CD4-positive, alpha-beta memory T cell (primary cell): ENCODE measurements at regions of chr14 and their contacts with region 1.

Region 1: DNA sequence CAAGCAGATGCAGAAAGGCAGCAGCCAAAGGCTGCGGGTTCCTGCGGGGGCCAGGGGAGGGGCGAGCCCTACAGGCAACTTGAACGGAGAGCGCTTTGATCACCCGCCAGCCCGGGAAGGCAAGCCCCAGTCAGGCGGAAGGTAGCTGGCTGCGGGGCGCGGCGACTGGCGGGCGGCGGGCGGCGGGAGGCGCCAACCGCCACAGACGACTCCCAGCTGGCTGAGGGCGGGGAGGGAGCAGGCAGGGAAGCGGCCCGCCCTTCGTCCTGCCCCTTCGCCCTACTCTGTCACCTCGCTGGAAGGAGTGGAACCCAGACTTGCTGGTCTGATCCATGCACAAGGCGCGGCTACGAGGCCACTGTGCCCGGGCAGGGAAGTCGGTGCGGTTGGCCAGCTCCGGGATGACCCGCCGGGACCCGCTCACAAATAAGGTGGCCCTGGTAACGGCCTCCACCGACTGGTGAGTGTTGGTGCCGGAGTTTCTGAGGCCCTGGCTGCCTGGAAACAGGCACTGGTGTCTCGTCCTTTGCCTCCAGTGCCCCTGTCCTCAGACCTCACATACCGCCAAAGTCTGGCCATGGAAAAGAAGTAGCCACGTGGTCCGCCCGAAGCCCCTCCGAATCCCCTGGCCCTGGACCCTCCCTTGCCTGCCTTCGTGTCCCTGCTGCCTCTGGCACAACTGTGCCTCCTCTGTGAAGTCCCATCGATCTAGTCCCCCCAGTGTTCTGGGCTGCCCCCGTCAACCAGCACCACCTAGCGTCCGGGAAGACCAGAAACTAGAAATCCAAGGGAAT is 15.4 kb upstream of the CARMIL3 start:
- DNase-seq: peak; percentile 53 to 77 (median 66)
- H3K4me3 ChIP-seq: peak overlapping the region; percentile 47 to 73
- H3K4me3 Mint-ChIP-seq: peak overlapping the region; percentile 87 to 100 (median 96)
- H3K27ac ChIP-seq: peak overlapping the region; percentile 67
- H3K27ac Mint-ChIP-seq: peak overlapping the region; percentile 79 to 94 (median 88)
- H3K4me1 ChIP-seq: peaks cover 3% of the 10 kb centered on the region
- H3K4me1 Mint-ChIP-seq: peaks cover 5 to 15% (median 8%) of the 10 kb centered on the region in 4 donors
- H3K27me3 ChIP-seq: no peaks in the 10 kb centered on the region
- H3K27me3 Mint-ChIP-seq: no peaks in the 10 kb centered on the region

Region 2: GRCh38 chr14:24013654-24014514 is 22.5 kb before region 1 on chr14:
- CTCF ChIA-PET with region 1: interaction called, 4 read pairs
- POLR2A ChIA-PET with region 1: no interaction called
- intact Hi-C with region 1: loop called (anchors 1 kb)
- DNase-seq: peak; percentile 60 to 77 (median 70)
- H3K4me3 ChIP-seq: no peak overlapping the region
- H3K4me3 Mint-ChIP-seq: no peak overlapping the region
- H3K27ac ChIP-seq: no peak overlapping the region
- H3K27ac Mint-ChIP-seq: no peak overlapping the region
- H3K4me1 ChIP-seq: peaks cover 19% of the 10 kb centered on the region
- H3K4me1 Mint-ChIP-seq: peaks cover 19 to 27% (median 23%) of the 10 kb centered on the region in 4 donors
- H3K27me3 ChIP-seq: no peaks in the 10 kb centered on the region
- H3K27me3 Mint-ChIP-seq: peaks cover 0 to 3% of the 10 kb centered on the region in 2 donors

Region 3: GRCh38 chr14:24051789-24052655 is 15.7 kb after region 1 on chr14 and contains the start of gene CARMIL3:
- CTCF ChIA-PET with region 1: interaction called, 21 read pairs
- POLR2A ChIA-PET with region 1: no interaction called
- intact Hi-C with region 1: loop called (anchors 1 kb)
- DNase-seq: peak; percentile 50 to 58 (median 53)
- H3K4me3 ChIP-seq: peak within 1 kb of the TSS in 1 of 2 donors; percentile 76
- H3K4me3 Mint-ChIP-seq: peak within 1 kb of the TSS; percentile 83 to 92 (median 88)
- H3K27ac ChIP-seq: peak within 1 kb of the TSS; percentile 16
- H3K27ac Mint-ChIP-seq: peak within 1 kb of the TSS in 5 of 7 donors; percentile 14 to 81 (median 68)
- H3K4me1 ChIP-seq: peaks cover 14% of the 10 kb centered on the region
- H3K4me1 Mint-ChIP-seq: peaks cover 10 to 17% (median 14%) of the 10 kb centered on the region in 4 donors
- H3K27me3 ChIP-seq: no peaks in the 10 kb centered on the region
- H3K27me3 Mint-ChIP-seq: peaks cover 6 to 8% of the 10 kb centered on the region in 2 donors
- total RNA-seq, gene CARMIL3: 0.15 to 0.22 TPM